Thyroid gland (tissue), 4 donors: ENCODE measurements at regions of chr9 and their contacts with region 1.

Region 1: DNA sequence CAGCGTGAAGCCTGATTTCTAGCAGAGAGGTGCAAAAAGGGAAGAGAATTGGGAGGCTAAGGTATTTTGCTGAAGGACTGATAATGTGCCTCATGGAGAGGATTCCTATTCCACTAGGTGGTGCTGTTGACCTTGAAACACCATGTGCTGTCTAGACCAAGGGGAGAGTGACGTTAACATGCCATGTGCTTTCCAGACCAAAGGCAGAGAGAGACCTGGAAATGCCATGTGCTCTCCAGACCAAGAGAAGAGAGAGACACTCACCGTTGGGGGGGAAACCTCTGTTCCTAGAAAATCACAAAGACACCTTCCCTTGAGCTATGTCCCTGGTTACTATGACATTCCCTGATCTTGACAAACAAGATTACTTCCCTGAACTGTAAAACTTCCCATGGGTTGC is 286.0 kb upstream of the TUSC1 start:
- DNase-seq: peak; percentile 32 to 47
- H3K4me3 ChIP-seq: no peak overlapping the region
- H3K27ac ChIP-seq: no peak overlapping the region
- H3K4me1 ChIP-seq: no peaks in the 10 kb centered on the region
- H3K27me3 ChIP-seq: no peaks in the 10 kb centered on the region
- CTCF ChIP-seq: peak in 4 of 6 experiments; percentile 49 to 75 (median 54)
- POLR2A ChIP-seq: no peak

Region 2: GRCh38 chr9:26326473-26327044 is 362.3 kb after region 1 on chr9:
- intact Hi-C with region 1: loop called (anchors 5 kb)
- DNase-seq: peak; percentile 42 to 45
- H3K4me3 ChIP-seq: no peak overlapping the region
- H3K27ac ChIP-seq: peak overlapping the region in 2 of 3 donors; percentile 48 to 50
- H3K4me1 ChIP-seq: peaks cover 17 to 18% of the 10 kb centered on the region in 2 donors
- H3K27me3 ChIP-seq: no peaks in the 10 kb centered on the region
- CTCF ChIP-seq: peak; percentile 16 to 85 (median 79)
- POLR2A ChIP-seq: no peak

Region 3: DNA sequence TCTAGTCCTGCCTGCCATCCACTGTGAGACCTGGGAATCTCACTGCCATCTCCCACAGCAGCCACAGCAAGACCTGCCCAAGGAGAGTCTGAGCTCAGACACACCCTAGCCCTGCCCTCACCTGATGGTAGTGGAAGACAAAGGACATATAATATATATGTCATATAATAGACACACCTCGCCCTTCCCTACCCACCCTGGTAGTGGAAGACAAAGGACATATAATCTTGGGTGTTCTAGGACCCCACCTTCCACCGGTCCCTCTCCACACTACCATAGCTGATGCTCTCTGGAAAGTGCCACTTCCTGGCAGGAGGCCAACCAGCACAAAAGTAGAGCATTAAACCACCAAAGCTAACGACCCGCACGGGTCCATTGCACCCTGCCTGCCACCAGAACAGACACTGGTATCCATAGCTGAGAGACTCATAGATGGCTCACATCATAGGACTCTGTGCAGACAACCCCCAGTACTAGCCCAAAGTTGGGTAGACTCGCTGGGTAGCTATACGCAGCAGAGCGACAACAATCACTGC is 382.8 kb after region 1 on chr9:
- intact Hi-C with region 1: no loop called
- DNase-seq: no peak
- H3K4me3 ChIP-seq: no peak overlapping the region
- H3K27ac ChIP-seq: no peak overlapping the region
- H3K4me1 ChIP-seq: peaks cover under 1 to 3% of the 10 kb centered on the region in 2 donors
- H3K27me3 ChIP-seq: no peaks in the 10 kb centered on the region
- CTCF ChIP-seq: no peak
- POLR2A ChIP-seq: no peak

Region 4: DNA sequence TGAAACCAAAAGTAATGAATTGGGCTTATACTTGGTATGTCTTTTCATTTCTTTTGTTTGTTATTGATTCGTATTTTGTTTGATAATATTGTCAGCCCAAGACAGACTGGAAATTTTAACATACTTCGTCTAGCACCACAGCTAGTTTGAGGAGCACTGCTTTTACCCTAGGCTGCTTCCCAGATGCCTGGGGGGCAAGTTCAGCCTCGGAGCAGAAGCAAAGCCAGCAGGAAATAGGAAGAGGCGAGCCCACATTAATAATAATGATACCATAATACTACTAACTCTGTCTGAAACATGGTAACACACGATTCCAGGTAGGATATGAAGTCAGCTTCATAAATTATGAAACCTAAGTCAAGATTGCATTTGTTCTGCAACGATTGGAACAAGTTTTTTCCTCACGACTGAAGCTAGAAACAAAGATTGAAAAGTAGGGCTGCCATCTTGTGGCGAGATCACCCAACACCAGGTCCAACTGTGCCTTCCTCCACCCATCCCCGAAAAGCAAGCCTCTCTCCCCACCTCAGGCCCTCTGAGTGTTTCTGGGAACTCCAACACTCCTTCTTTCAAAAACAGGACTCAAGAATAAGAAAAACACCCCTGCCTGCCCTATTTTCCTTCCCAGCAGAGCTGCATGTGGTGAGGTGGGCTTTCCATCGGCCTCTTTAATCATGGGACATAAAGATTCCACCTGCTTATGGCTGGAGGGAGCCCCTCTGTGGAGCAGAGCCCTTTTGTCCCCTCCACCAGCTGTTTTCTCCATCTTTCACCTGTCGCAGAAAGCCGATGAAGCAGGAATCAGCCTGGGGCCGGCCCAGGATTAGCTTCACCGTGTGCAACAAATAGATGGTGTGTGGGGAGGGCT is 692.0 kb after region 1 on chr9:
- intact Hi-C with region 1: loop called (anchors 10 kb)
- DNase-seq: peak; percentile 53 to 63
- H3K4me3 ChIP-seq: no peak overlapping the region
- H3K27ac ChIP-seq: no peak overlapping the region
- H3K4me1 ChIP-seq: peaks cover 0 to 8% of the 10 kb centered on the region in 2 donors
- H3K27me3 ChIP-seq: no peaks in the 10 kb centered on the region
- CTCF ChIP-seq: peak in 4 of 6 experiments; percentile 49 to 80 (median 67)
- POLR2A ChIP-seq: no peak